ENCODE measurements at regions of chr14 and their contacts with region 1.

Region 1: GRCh38 chr14:75648066-75648838 is 12.4 kb downstream of the ERG28 start:
- DNase-seq: peak; percentile 79 to 90
- ATAC-seq: peak; percentile 90 to 97
- H3K4me3 ChIP-seq: no peak overlapping the region
- H3K27ac ChIP-seq: peak overlapping the region; percentile 79 to 88 (median 83)
- H3K4me1 ChIP-seq: peaks cover 34 to 38% of the 10 kb centered on the region in 2 donors
- H3K27me3 ChIP-seq: no peaks in the 10 kb centered on the region
- CTCF ChIP-seq: no peak
- POLR2A ChIP-seq: no peak

Region 2: GRCh38 chr14:75249958-75250336 is 398.3 kb before region 1 on chr14:
- in situ Hi-C with region 1: no loop called
- intact Hi-C with region 1: loop called (anchors 5 kb)
- DNase-seq: no peak
- ATAC-seq: peak; percentile 67 to 76
- H3K4me3 ChIP-seq: no peak overlapping the region
- H3K27ac ChIP-seq: peak overlapping the region; percentile 90 to 96 (median 91)
- H3K4me1 ChIP-seq: peaks cover 30 to 38% of the 10 kb centered on the region in 2 donors
- H3K27me3 ChIP-seq: no peaks in the 10 kb centered on the region
- CTCF ChIP-seq: no peak
- POLR2A ChIP-seq: peak in 1 of 2 donors; percentile 38

Region 3: GRCh38 chr14:75831458-75831857 is 183.2 kb after region 1 on chr14:
- in situ Hi-C with region 1: no loop called
- intact Hi-C with region 1: no loop called
- DNase-seq: peak; percentile 14 to 37
- ATAC-seq: peak in 1 of 2 donors; percentile 66
- H3K4me3 ChIP-seq: no peak overlapping the region
- H3K27ac ChIP-seq: no peak overlapping the region
- H3K4me1 ChIP-seq: peaks cover 0 to 13% of the 10 kb centered on the region in 2 donors
- H3K27me3 ChIP-seq: no peaks in the 10 kb centered on the region
- CTCF ChIP-seq: no peak
- POLR2A ChIP-seq: no peak

Region 4: GRCh38 chr14:76168531-76168930 is 520.3 kb after region 1 on chr14:
- in situ Hi-C with region 1: no loop called
- intact Hi-C with region 1: no loop called
- DNase-seq: no peak
- ATAC-seq: no peak
- H3K4me3 ChIP-seq: no peak overlapping the region
- H3K27ac ChIP-seq: no peak overlapping the region
- H3K4me1 ChIP-seq: peaks cover 56% of the 10 kb centered on the region in 2 donors
- H3K27me3 ChIP-seq: no peaks in the 10 kb centered on the region
- CTCF ChIP-seq: no peak
- POLR2A ChIP-seq: no peak

Measured in gastrocnemius medialis (tissue), 4 donors.